ENCODE measurements at regions of chr3 and their contacts with region 1.

Region 1: GRCh38 chr3:185983495-185984141 is 45.8 kb upstream of the TRA2B start:
- DNase-seq: peak; percentile 46 to 94 (median 80)

Region 2: DNA sequence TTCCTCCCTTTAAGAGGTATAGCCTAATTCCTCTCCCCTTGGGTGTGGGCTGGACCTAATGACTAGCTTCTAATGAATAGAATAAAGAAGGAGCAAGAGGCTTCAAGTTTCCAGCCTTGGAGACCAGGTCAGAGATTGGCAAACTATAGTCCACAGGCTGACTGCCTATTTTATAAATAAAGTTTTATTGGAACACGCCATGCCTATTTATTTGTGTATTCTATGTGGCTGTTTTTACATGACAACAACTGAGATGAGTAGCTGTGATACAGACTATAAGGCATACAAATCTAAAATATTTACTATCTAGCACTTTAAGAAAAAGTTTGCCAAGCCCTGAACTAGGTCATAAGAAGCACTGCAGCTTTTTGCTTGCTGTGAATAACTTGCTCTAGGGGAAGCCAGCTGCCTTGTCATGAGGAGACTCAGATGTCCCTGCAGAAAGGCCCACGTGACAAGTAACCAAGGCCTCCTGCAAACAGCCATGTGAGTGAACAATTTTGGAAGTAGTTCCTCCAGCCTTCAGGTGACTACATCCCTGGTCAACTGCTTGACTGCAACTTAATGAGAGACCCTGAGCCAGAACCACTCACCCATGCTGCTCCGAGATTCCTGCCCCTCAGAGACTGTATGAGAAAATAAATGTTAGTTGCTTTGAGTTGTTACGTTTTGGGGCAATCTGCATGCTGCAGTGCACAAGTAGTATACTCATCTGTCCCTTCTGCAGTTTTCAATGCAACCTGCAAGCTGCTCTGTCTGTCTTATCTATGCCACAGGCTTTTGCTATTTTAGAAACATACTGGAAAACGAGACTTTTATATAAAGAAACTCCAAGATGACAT is 641.8 kb before region 1 on chr3:
- intact Hi-C with region 1: no loop called
- DNase-seq: peak in 8 of 42 donors; percentile 11 to 50 (median 26)

Region 3: GRCh38 chr3:185717121-185717520 is 266.5 kb before region 1 on chr3:
- intact Hi-C with region 1: no loop called
- DNase-seq: no peak

Region 4: GRCh38 chr3:186108941-186109865 is 125.6 kb after region 1 on chr3 and contains the start of gene ETV5:
- intact Hi-C with region 1: loop called (anchors 5 kb)
- DNase-seq: peak; percentile 98 to 100 (median 100)

Region 5: GRCh38 chr3:186220911-186221645 is 237.5 kb after region 1 on chr3:
- intact Hi-C with region 1: loop called (anchors 5 kb)
- DNase-seq: peak in 41 of 42 donors; percentile 39 to 87 (median 70)

Region 6: GRCh38 chr3:186277268-186277909 is 293.8 kb after region 1 on chr3:
- intact Hi-C with region 1: loop called (anchors 5 kb)
- DNase-seq: peak in 37 of 42 donors; percentile 15 to 82 (median 51)

Region 7: GRCh38 chr3:186540221-186540834 is 556.7 kb after region 1 on chr3:
- intact Hi-C with region 1: loop called (anchors 5 kb)
- DNase-seq: peak; percentile 37 to 93 (median 82)